ENCODE measurements at regions of chr3 and their contacts with region 1.

Region 1: GRCh38 chr3:2506776-2507175 is 408.1 kb downstream of the CNTN4 start:
- DNase-seq: no peak
- H3K4me3 ChIP-seq: no peak overlapping the region
- H3K27ac ChIP-seq: no peak overlapping the region
- H3K4me1 ChIP-seq: no peaks in the 10 kb centered on the region
- H3K27me3 ChIP-seq: no peaks in the 10 kb centered on the region
- CTCF ChIP-seq: no peak
- EP300 ChIP-seq: no peak
- POLR2A ChIP-seq: no peak

Region 2: GRCh38 chr3:2495746-2496145 is 11.0 kb before region 1 on chr3:
- in situ Hi-C with region 1: no loop called
- intact Hi-C with region 1: loop called (anchors 1 kb)
- DNase-seq: no peak
- H3K4me3 ChIP-seq: no peak overlapping the region
- H3K27ac ChIP-seq: no peak overlapping the region
- H3K4me1 ChIP-seq: no peaks in the 10 kb centered on the region
- H3K27me3 ChIP-seq: no peaks in the 10 kb centered on the region
- CTCF ChIP-seq: no peak
- EP300 ChIP-seq: no peak
- POLR2A ChIP-seq: no peak

Region 3: GRCh38 chr3:3038201-3038991 is 531.6 kb after region 1 on chr3:
- in situ Hi-C with region 1: no loop called
- intact Hi-C with region 1: no loop called
- DNase-seq: no peak
- H3K4me3 ChIP-seq: no peak overlapping the region
- H3K27ac ChIP-seq: no peak overlapping the region
- H3K4me1 ChIP-seq: no peaks in the 10 kb centered on the region
- H3K27me3 ChIP-seq: no peaks in the 10 kb centered on the region
- CTCF ChIP-seq: no peak
- EP300 ChIP-seq: no peak
- POLR2A ChIP-seq: no peak

Region 4: DNA sequence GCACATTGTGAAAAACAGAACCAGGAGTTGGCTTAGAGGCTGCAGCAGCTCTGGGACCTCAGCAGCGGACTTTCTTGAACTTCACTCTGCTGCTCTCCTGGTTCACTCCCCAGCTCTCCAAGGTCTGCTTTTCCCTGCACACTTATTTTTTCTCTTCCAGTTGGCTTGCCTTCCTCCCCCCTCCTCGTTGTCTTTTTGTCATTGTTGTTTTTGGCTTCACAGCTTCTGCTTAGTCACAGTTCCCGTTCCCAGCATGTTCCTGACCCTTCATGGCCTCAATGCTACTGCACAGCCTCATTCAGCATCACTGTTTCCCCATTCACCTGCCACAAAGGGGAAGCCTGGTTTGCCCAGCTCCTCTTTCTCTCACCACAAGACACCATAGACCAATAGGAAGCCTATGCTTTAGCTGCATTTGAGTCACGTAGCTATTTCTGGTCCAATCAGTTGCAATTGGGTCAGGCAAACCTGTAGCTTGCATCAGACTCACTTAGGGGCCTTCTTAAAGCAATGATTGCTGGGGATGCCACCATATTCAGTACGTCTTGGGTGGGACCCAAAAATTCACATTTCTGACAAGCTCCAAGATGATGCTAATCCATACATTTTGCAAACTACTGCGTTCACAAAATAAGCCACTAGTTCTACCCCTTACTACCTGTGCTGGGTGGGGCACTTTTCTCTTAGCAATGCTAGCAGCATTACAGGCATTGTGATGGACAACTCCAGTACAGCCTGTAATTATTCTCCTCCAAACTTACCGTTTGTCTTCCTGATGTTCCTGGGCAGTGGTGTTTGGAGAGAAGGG is 1968.1 kb after region 1 on chr3:
- in situ Hi-C with region 1: no loop called
- intact Hi-C with region 1: no loop called
- DNase-seq: no peak
- H3K4me3 ChIP-seq: no peak overlapping the region
- H3K27ac ChIP-seq: no peak overlapping the region
- H3K4me1 ChIP-seq: no peaks in the 10 kb centered on the region
- H3K27me3 ChIP-seq: peaks cover 6% of the 10 kb centered on the region
- CTCF ChIP-seq: no peak
- EP300 ChIP-seq: no peak
- POLR2A ChIP-seq: no peak